ENCODE measurements at regions of chr15 and their contacts with region 1.

Region 1: GRCh38 chr15:90320061-90320884 is 31.8 kb upstream of the ZNF774 start:
- DNase-seq: peak; percentile 83
- ATAC-seq: peak; percentile 99
- H3K4me3 Mint-ChIP-seq: no peak overlapping the region
- H3K27ac Mint-ChIP-seq: no peak overlapping the region
- H3K4me1 Mint-ChIP-seq: peaks cover 6% of the 10 kb centered on the region
- H3K27me3 Mint-ChIP-seq: no peaks in the 10 kb centered on the region

Region 2: GRCh38 chr15:89556413-89557262 is 763.6 kb before region 1 on chr15:
- CTCF ChIA-PET with region 1: no interaction called
- POLR2A ChIA-PET with region 1: no interaction called
- intact Hi-C with region 1: no loop called
- DNase-seq: peak; percentile 55
- ATAC-seq: peak; percentile 44
- H3K4me3 Mint-ChIP-seq: no peak overlapping the region
- H3K27ac Mint-ChIP-seq: no peak overlapping the region
- H3K4me1 Mint-ChIP-seq: peaks cover 2% of the 10 kb centered on the region
- H3K27me3 Mint-ChIP-seq: peaks cover 4% of the 10 kb centered on the region

Region 3: DNA sequence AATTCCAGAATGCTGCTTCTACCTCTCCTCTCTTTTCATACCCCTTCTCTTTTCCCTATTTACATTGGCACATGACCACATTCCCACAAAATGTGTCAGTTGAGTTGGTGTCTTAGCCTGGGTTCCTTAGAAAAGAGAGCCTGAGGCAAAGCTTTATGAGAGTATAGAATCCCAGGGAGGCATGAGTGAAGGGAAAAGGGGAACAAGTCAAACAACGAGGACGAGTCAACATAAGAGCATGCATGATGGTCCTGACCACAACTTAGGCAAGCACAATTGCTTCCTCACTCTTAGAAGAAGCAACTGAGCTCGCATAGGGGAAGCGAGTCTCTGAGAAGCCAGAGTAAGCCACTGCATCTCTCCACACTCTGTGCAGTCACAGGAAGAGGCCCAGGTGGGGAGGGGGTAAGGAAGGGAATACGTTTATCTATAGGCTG is 16.4 kb after region 1 on chr15:
- CTCF ChIA-PET with region 1: interaction called, 24 read pairs
- POLR2A ChIA-PET with region 1: no interaction called
- intact Hi-C with region 1: no loop called
- DNase-seq: peak; percentile 22
- ATAC-seq: peak; percentile 74
- H3K4me3 Mint-ChIP-seq: no peak overlapping the region
- H3K27ac Mint-ChIP-seq: no peak overlapping the region
- H3K4me1 Mint-ChIP-seq: peaks cover 9% of the 10 kb centered on the region
- H3K27me3 Mint-ChIP-seq: no peaks in the 10 kb centered on the region

Region 4: GRCh38 chr15:90376789-90377188 is 56.5 kb after region 1 on chr15:
- CTCF ChIA-PET with region 1: interaction called, 12 read pairs
- POLR2A ChIA-PET with region 1: no interaction called
- intact Hi-C with region 1: no loop called
- DNase-seq: peak; percentile 66
- ATAC-seq: peak; percentile 88
- H3K4me3 Mint-ChIP-seq: peak overlapping the region; percentile 16
- H3K27ac Mint-ChIP-seq: peak overlapping the region; percentile 94
- H3K4me1 Mint-ChIP-seq: peaks cover 31% of the 10 kb centered on the region
- H3K27me3 Mint-ChIP-seq: no peaks in the 10 kb centered on the region

Region 5: DNA sequence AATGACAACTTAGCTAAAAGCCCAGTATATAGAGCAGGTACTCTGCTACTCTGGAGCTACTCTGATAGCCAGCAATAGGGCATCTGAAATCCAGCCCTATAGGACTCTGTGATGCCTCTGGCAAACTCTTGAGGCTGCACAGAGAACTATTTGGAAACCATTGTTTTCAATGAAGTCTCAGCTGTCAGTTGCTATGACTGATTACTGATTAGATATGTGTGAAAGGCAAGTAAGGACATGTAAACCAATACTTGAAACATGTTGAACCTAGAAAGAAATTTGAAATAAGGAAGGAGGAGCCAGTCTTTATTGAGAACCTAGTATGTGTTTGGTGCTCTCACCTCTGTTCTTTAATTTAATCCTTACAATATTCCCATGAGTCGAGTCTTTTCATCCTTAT is 169.2 kb after region 1 on chr15:
- CTCF ChIA-PET with region 1: interaction called, 24 read pairs
- POLR2A ChIA-PET with region 1: no interaction called
- intact Hi-C with region 1: no loop called
- DNase-seq: no peak
- ATAC-seq: no peak
- H3K4me3 Mint-ChIP-seq: no peak overlapping the region
- H3K27ac Mint-ChIP-seq: peak overlapping the region; percentile 11
- H3K4me1 Mint-ChIP-seq: peaks cover 15% of the 10 kb centered on the region
- H3K27me3 Mint-ChIP-seq: no peaks in the 10 kb centered on the region

Region 6: DNA sequence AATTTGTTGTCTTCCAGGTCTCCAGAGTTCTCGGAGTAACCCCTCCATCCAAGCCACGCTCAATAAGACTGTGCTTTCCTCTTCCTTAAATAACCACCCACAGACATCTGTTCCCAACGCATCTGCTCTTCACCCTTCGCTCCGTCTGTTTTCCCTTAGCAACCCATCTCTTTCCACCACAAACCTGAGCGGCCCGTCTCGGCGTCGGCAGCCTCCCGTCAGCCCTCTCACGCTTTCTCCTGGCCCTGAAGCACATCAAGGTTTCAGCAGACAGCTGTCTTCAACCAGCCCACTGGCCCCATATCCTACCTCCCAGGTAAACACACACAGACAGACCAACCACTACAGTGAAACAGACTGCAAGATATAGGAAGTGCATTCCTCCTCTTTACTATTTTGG is 308.9 kb after region 1 on chr15:
- CTCF ChIA-PET with region 1: interaction called, 8 read pairs
- POLR2A ChIA-PET with region 1: no interaction called
- intact Hi-C with region 1: loop called (anchors 5 kb)
- DNase-seq: no peak
- ATAC-seq: no peak
- H3K4me3 Mint-ChIP-seq: no peak overlapping the region
- H3K27ac Mint-ChIP-seq: no peak overlapping the region
- H3K4me1 Mint-ChIP-seq: peaks cover 7% of the 10 kb centered on the region
- H3K27me3 Mint-ChIP-seq: no peaks in the 10 kb centered on the region

Measured in activated CD4-positive, alpha-beta T cell treated with anti-CD3 and anti-CD28 coated beads for 36 hours (primary cell).